Natural killer cell (primary cell): ENCODE measurements at regions of chr3 and their contacts with region 1.

Region 1: GRCh38 chr3:38479431-38480092 is 16.6 kb upstream of the EXOG start:
- DNase-seq: peak in 1 of 2 donors; percentile 78
- ATAC-seq: peak; percentile 52 to 87 (median 79)
- H3K4me3 ChIP-seq: no peak overlapping the region
- H3K4me3 Mint-ChIP-seq: no peak overlapping the region
- H3K27ac ChIP-seq: no peak overlapping the region
- H3K27ac Mint-ChIP-seq: no peak overlapping the region
- H3K4me1 ChIP-seq: no peaks in the 10 kb centered on the region
- H3K4me1 Mint-ChIP-seq: peaks cover under 1 to 1% of the 10 kb centered on the region in 2 donors
- H3K27me3 ChIP-seq: no peaks in the 10 kb centered on the region
- H3K27me3 Mint-ChIP-seq: no peaks in the 10 kb centered on the region
- CTCF ChIP-seq: peak; percentile 76

Region 2: GRCh38 chr3:37855363-37855970 is 624.1 kb before region 1 on chr3:
- intact Hi-C with region 1: loop called (anchors 10 kb)
- DNase-seq: peak; percentile 62 to 81
- ATAC-seq: peak; percentile 51 to 56 (median 55)
- H3K4me3 ChIP-seq: no peak overlapping the region
- H3K4me3 Mint-ChIP-seq: no peak overlapping the region
- H3K27ac ChIP-seq: no peak overlapping the region
- H3K27ac Mint-ChIP-seq: no peak overlapping the region
- H3K4me1 ChIP-seq: peaks cover 8% of the 10 kb centered on the region
- H3K4me1 Mint-ChIP-seq: peaks cover under 1 to 4% of the 10 kb centered on the region in 2 donors
- H3K27me3 ChIP-seq: no peaks in the 10 kb centered on the region
- H3K27me3 Mint-ChIP-seq: peaks cover 0 to 14% of the 10 kb centered on the region in 2 donors
- CTCF ChIP-seq: peak; percentile 89

Region 3: DNA sequence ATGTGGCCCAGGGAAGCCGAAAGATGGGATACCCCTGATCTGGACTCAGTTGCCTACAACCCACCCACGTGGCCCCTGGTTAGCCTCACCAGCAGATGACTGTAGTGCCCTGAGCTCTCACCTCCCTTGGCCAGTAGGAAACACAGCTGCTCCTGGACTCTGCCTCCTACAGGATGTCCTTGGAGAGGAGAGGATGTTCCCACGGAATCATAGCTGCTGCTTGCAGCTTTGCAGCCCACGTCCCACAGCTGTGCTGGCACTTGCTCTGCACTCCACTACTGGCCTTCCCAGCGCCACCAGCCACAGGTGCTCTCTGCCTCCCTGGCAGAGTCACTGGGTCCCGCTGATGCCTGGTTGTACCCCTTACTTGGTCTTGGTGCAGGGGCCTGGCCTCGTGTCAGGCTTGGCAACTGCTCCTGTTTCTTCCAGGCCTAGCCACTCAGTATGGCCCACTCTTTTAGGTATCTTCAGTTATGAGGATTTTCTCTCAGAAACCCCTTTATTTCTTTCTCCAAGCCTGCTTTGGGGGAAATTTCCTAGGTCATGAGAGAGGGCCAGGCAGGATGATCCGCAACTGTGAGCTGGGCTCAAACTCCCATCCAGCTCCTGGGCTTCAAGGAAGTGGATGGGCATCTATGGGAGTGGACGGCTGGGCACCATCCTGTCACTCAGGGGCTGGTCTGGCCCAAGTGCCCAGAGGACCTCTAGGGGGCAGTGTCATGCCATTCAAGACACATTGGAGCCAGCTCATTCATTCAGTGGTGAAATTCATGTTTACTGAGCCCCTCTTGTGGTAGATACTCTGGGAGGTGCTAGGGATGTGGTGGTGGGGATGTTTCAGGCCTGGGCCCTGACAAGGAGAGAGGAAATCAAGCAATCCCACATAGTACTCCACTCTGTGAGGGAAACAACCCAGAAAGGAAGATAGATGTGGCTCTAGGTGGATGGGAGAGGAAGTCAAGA is 505.2 kb before region 1 on chr3:
- intact Hi-C with region 1: loop called (anchors 2 kb)
- DNase-seq: peak; percentile 57 to 86
- ATAC-seq: peak; percentile 89 to 99 (median 99)
- H3K4me3 ChIP-seq: no peak overlapping the region
- H3K4me3 Mint-ChIP-seq: no peak overlapping the region
- H3K27ac ChIP-seq: no peak overlapping the region
- H3K27ac Mint-ChIP-seq: no peak overlapping the region
- H3K4me1 ChIP-seq: peaks cover 5% of the 10 kb centered on the region
- H3K4me1 Mint-ChIP-seq: peaks cover 0 to 6% of the 10 kb centered on the region in 2 donors
- H3K27me3 ChIP-seq: no peaks in the 10 kb centered on the region
- H3K27me3 Mint-ChIP-seq: no peaks in the 10 kb centered on the region
- CTCF ChIP-seq: peak; percentile 85

Region 4: DNA sequence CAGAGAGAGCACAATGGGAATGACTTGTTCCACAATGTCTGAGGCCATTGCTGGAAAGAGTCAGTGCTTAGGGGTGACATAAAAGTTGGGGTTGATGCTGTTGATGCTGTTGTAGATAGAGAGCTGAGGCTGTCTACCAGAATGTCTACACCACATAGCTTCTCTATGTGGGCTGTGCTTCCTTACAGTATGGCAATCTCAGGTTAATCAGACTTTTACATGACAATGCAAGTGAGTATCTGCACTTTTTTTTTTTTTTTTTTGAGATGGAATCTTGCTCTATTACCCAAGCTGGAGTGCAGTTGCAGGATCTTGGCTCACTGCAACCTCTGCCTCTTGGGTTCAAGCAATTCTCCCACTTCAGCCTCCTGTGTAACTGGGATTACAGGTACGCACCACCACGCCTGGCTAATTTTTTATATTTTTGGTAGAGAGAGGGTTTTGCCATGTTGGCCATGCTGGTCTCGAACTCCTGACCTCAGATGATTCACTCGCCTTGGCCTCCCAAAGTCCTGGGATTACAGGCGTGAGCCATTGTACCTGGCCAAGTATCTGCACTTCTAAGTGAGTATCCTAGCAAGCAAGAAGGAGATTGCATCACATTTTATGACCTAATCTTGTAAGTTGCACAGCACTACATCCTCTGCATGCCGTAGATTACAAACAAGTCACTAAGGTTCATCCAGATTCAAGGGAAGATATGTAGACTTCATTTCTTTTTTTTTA is 411.9 kb before region 1 on chr3:
- intact Hi-C with region 1: no loop called
- DNase-seq: no peak
- ATAC-seq: peak in 1 of 3 donors; percentile 89
- H3K4me3 ChIP-seq: no peak overlapping the region
- H3K4me3 Mint-ChIP-seq: no peak overlapping the region
- H3K27ac ChIP-seq: no peak overlapping the region
- H3K27ac Mint-ChIP-seq: no peak overlapping the region
- H3K4me1 ChIP-seq: no peaks in the 10 kb centered on the region
- H3K4me1 Mint-ChIP-seq: no peaks in the 10 kb centered on the region
- H3K27me3 ChIP-seq: no peaks in the 10 kb centered on the region
- H3K27me3 Mint-ChIP-seq: no peaks in the 10 kb centered on the region
- CTCF ChIP-seq: no peak

Region 5: DNA sequence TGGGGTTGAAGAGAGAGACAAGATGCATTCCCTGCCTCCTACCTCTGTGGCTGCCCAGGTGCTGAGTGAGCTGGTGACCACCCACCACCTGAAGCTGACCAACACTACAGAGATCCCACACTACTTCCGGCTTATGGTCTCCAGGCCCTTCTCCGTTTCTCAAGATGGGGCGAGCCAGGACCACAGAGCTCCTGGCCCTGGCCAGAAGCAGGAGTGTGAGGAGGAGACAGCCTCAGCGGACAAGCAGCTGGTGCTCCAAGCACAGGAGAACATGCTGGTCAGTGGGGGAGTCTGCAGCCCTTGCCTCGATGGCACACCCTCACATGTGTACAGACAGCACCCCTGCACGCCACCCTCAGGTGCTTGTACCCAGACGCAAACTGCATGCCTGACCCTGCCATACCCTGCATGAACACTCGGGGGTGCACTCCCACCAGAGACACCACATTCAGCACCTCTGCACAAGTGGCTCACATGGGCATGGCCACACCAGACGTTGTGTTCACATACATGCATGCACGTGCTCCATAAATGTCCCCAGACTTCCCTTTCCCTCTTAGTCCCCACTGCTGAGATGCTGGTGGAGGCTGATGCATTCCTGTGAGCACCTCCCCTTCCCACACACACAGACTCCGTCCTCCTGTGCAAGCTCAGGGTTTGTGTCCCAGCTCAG is 361.7 kb before region 1 on chr3:
- intact Hi-C with region 1: loop called (anchors 1 kb)
- DNase-seq: peak; percentile 61 to 84
- ATAC-seq: peak; percentile 83 to 95 (median 85)
- H3K4me3 ChIP-seq: no peak overlapping the region
- H3K4me3 Mint-ChIP-seq: no peak overlapping the region
- H3K27ac ChIP-seq: no peak overlapping the region
- H3K27ac Mint-ChIP-seq: no peak overlapping the region
- H3K4me1 ChIP-seq: peaks cover 3% of the 10 kb centered on the region
- H3K4me1 Mint-ChIP-seq: peaks cover 0 to 33% of the 10 kb centered on the region in 2 donors
- H3K27me3 ChIP-seq: no peaks in the 10 kb centered on the region
- H3K27me3 Mint-ChIP-seq: no peaks in the 10 kb centered on the region
- CTCF ChIP-seq: peak; percentile 52

Region 6: DNA sequence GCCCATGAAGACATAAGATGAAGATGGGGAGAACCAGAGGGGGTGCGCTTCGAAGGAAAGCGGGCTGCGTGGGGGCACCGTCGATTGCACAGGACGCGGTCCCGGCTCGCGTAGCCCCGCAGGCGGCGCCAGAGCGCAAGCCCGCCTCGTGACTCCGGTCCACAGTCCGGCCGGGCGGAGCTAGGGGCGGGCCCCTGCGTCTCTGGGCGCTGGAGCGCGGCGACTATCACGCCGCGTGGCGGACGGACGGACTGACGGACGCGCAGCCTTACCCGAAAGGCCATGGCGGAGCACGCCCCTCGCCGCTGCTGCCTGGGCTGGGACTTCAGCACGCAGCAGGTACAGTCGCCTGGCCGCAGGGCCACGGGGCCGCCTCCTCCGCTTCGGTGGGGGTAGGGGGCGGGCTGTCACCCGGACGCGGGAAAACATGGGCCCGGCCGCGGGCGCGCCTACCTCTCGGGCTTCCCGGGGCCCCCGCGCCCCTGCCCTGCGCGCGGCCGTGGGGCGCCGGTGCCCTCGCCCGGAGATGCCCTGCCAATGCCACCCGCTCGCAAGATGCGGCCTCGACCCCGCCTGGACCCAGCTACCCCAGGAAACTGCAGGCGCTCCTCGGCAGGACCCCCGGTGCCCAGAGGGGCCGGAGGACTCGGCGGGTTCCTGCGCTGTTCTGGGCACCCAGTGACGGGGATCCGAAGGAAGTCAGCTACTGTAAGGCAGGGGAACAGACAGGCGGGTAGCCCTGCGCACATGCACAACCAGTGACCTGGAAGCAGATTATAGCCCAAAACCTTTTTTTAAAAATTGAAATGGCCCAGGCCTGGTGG is 132.8 kb before region 1 on chr3 and contains the start of gene XYLB:
- intact Hi-C with region 1: loop called (anchors 2 kb)
- DNase-seq: peak; percentile 78 to 83
- ATAC-seq: peak; percentile 98 to 99 (median 99)
- H3K4me3 ChIP-seq: peak within 1 kb of the TSS; percentile 52
- H3K4me3 Mint-ChIP-seq: peak within 1 kb of the TSS; percentile 85
- H3K27ac ChIP-seq: no peak within 1 kb of the TSS
- H3K27ac Mint-ChIP-seq: peak within 1 kb of the TSS; percentile 18 to 80
- H3K4me1 ChIP-seq: peaks cover 13% of the 10 kb centered on the region
- H3K4me1 Mint-ChIP-seq: peaks cover 0 to 10% of the 10 kb centered on the region in 2 donors
- H3K27me3 ChIP-seq: no peaks in the 10 kb centered on the region
- H3K27me3 Mint-ChIP-seq: peaks cover 0 to 5% of the 10 kb centered on the region in 2 donors
- CTCF ChIP-seq: peak; percentile 83
- total RNA-seq, gene XYLB: 1.6 to 3.7 (median 2.4) TPM